A673 (cell line): ENCODE measurements at regions of chr15 and their contacts with region 1.

Region 1: GRCh38 chr15:69557340-69558137 is 104.9 kb downstream of the RPLP1 start:
- DNase-seq: peak; percentile 86
- H3K4me3 ChIP-seq: no peak overlapping the region
- H3K27ac ChIP-seq: no peak overlapping the region
- H3K4me1 ChIP-seq: peaks cover 17% of the 10 kb centered on the region
- H3K27me3 ChIP-seq: no peaks in the 10 kb centered on the region
- CTCF ChIP-seq: no peak

Region 2: DNA sequence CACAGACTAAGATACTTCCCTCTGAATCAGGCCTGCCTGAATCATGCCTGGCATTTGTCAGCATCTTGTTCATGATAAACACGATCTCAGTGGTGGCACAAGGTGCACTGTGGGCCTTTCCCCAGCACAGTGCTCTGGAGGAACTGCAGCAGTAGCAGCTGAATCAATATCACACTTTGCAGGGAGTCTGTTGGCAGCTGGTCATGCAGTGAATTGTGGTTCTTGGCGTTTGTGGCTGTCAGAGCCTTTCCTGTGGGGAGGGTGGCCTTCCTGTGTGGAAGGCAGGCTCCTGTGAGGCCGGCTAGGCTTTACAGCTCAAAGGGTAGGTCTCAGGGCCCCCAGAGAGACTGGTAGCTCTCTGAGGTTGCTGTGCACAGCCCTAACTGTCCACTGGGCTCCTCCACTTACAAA is 594.5 kb after region 1 on chr15:
- CTCF ChIA-PET with region 1: no interaction called
- POLR2A ChIA-PET with region 1: interaction called, 18 read pairs
- intact Hi-C with region 1: no loop called
- DNase-seq: no peak
- H3K4me3 ChIP-seq: no peak overlapping the region
- H3K27ac ChIP-seq: no peak overlapping the region
- H3K4me1 ChIP-seq: peaks cover 15% of the 10 kb centered on the region
- H3K27me3 ChIP-seq: no peaks in the 10 kb centered on the region
- CTCF ChIP-seq: no peak